K562 (cell line): ENCODE measurements at regions of chr1 and their contacts with region 1.

Region 1: DNA sequence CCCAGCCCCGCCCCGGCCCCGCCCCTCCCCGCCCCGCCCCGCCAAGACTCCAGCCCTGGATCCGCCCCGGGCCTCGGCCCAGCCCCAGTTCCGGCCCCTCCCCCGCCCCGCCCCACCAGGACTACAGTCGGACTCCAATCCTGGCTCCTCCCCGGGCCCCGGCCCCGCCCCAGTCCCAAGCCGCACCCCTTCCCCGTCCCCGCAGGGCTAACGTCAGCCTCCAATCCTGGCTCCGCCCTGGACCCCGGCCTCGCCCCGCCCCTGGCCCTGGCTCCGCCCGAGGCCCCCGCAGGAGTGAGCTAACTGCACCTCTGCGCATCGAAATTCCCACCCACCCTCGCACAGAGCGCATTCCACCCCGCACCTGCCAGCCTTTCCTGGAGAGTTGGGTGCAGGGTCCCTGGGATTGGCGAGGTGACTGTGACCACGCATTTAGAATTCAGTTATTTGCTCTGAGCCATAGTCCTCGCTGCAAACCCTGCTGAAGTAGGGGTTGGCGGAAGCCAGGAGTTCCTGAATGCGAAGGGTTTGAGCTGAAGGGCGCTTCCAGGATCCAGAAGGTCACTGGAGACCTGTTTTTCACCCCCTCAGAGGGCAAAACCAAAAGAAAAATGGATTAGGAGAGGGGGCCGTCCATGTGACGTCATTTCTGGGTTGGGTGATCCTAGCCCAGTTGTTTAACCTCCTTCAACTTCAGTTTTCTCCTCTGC is 588 bp upstream of the IGSF8 start:
- DNase-seq: peak; percentile 95 to 99 (median 98)
- ATAC-seq: peak; percentile 96
- H3K4me3 ChIP-seq: peak overlapping the region; percentile 45
- H3K27ac ChIP-seq: peak overlapping the region; percentile 71
- H3K4me1 ChIP-seq: peaks cover 18 to 35% of the 10 kb centered on the region in 2 experiments; a peak in 4 of 5 replicates
- H3K27me3 ChIP-seq: no peaks in the 10 kb centered on the region
- CTCF ChIP-seq: no peak
- EP300 ChIP-seq: no peak
- POLR2A ChIP-seq: no peak
- RAD21 ChIP-seq: no peak

Region 2: GRCh38 chr1:160161965-160162705 is 63.1 kb after region 1 on chr1:
- CTCF ChIA-PET with region 1: interaction called, 3 read pairs
- POLR2A ChIA-PET with region 1: no interaction called
- in situ Hi-C with region 1: no loop called
- intact Hi-C with region 1: loop called (anchors 1 kb)
- DNase-seq: peak in 3 of 4 experiments; percentile 24 to 45 (median 33)
- ATAC-seq: peak; percentile 92
- H3K4me3 ChIP-seq: no peak overlapping the region
- H3K27ac ChIP-seq: no peak overlapping the region
- H3K4me1 ChIP-seq: peaks cover 0 to 9% of the 10 kb centered on the region in 2 experiments; a peak in 3 of 5 replicates
- H3K27me3 ChIP-seq: peaks cover 9 to 34% of the 10 kb centered on the region in 2 experiments; a peak in 4 of 5 replicates
- CTCF ChIP-seq: peak; percentile 55 to 89 (median 68)
- EP300 ChIP-seq: no peak
- POLR2A ChIP-seq: no peak
- RAD21 ChIP-seq: peak; percentile 14 to 62; a peak in 2 of 4 replicates

Region 3: GRCh38 chr1:160251687-160252526 is 152.9 kb after region 1 on chr1:
- CTCF ChIA-PET with region 1: interaction called, 11 read pairs
- POLR2A ChIA-PET with region 1: interaction called, 6 read pairs
- in situ Hi-C with region 1: no loop called
- intact Hi-C with region 1: loop called (anchors 1 kb)
- DNase-seq: peak; percentile 57 to 72 (median 65)
- ATAC-seq: peak; percentile 96
- H3K4me3 ChIP-seq: no peak overlapping the region
- H3K27ac ChIP-seq: no peak overlapping the region
- H3K4me1 ChIP-seq: no peaks in the 10 kb centered on the region; a peak in 1 of 5 replicates
- H3K27me3 ChIP-seq: no peaks in the 10 kb centered on the region
- CTCF ChIP-seq: peak; percentile 67 to 81 (median 74)
- EP300 ChIP-seq: no peak
- POLR2A ChIP-seq: no peak
- RAD21 ChIP-seq: peak; percentile 78 to 80

Region 4: DNA sequence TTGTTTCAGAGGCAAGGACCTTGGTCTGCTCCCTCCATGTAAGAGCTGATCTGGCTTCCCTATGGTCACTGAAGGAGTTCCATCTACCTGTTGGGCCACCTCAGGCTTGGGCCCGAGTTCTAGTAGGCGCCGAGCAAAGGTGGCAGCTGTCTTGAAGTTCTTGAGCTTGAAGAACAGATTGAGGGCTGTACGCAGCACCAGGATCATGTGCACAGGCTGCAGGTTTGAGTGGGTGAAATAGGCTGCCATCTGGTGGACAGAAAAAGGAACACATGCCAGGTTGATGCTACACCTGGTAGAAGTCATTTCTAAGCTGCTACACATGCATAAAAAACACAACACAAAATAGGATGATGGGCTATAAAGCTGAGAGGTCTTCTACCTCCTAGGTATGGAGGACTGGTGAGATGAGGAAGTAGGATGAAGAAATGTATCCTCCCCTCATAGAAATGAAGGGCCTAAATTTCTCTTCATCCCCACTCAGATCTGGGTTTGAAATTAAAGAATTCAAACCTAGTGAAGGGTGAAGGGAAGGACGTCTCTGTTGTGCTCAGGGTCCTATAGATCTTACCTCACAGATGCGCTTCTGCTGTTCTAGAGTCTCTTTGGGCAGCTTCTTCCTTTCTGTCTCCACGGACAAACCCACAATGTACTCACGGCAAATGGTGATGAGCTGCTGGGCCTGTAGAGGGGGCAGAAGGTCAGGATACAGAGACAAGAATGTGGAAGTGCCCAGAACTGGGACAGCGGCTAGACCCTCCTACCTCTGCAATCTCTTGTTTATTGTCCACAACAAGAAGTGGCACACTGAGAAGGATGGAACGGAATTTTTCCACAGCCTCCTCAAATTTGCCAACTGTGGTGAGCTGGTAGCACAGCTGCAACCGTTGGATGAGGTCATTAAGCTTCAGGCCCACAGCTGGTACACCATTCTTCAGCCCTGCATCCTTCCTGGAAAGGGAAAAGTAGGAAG is 192.5 kb after region 1 on chr1:
- CTCF ChIA-PET with region 1: no interaction called
- POLR2A ChIA-PET with region 1: interaction called, 4 read pairs
- in situ Hi-C with region 1: no loop called
- intact Hi-C with region 1: loop called (anchors 2 kb)
- DNase-seq: peak; percentile 56 to 72 (median 68)
- ATAC-seq: peak; percentile 93
- H3K4me3 ChIP-seq: no peak overlapping the region
- H3K27ac ChIP-seq: no peak overlapping the region
- H3K4me1 ChIP-seq: no peaks in the 10 kb centered on the region
- H3K27me3 ChIP-seq: no peaks in the 10 kb centered on the region
- CTCF ChIP-seq: peak; percentile 76 to 77 (median 76)
- EP300 ChIP-seq: no peak
- POLR2A ChIP-seq: no peak
- RAD21 ChIP-seq: peak in 1 of 2 experiments; percentile 60; a peak in 3 of 4 replicates